ENCODE measurements at regions of chr3 and their contacts with region 1.

Region 1: DNA sequence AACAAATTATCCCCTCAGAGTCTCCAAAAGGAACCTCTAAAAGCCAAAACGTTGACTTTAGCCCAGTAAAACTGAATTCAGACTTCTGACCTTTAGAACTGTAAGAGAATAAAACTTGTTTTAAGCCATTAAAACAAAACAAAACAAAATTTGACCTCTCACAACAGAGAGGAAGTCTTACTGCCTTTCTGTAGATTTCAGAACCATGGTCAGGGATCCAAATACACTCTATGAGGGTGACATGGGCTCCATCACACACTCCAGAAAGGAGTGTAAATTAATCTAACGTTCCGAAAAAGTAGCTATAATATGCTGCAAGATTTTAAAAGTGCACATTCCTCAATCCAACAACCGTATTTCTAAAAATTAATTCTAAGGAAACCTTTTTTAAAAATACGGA is 19.2 kb upstream of the RPL14 start:
- DNase-seq: no peak
- ATAC-seq: no peak
- H3K4me3 ChIP-seq: no peak overlapping the region
- H3K27ac ChIP-seq: no peak overlapping the region
- H3K4me1 ChIP-seq: no peaks in the 10 kb centered on the region
- H3K27me3 ChIP-seq: no peaks in the 10 kb centered on the region
- CTCF ChIP-seq: no peak

Region 2: GRCh38 chr3:40468018-40468417 is 30.1 kb after region 1 on chr3:
- CTCF ChIA-PET with region 1: no interaction called
- POLR2A ChIA-PET with region 1: no interaction called
- intact Hi-C with region 1: loop called (anchors 1 kb)
- DNase-seq: no peak
- ATAC-seq: peak; percentile 49
- H3K4me3 ChIP-seq: no peak overlapping the region
- H3K27ac ChIP-seq: no peak overlapping the region
- H3K4me1 ChIP-seq: no peaks in the 10 kb centered on the region
- H3K27me3 ChIP-seq: no peaks in the 10 kb centered on the region
- CTCF ChIP-seq: no peak

Measured in PC-3 (cell line).